ENCODE measurements at regions of chr2 and their contacts with region 1.

Region 1: DNA sequence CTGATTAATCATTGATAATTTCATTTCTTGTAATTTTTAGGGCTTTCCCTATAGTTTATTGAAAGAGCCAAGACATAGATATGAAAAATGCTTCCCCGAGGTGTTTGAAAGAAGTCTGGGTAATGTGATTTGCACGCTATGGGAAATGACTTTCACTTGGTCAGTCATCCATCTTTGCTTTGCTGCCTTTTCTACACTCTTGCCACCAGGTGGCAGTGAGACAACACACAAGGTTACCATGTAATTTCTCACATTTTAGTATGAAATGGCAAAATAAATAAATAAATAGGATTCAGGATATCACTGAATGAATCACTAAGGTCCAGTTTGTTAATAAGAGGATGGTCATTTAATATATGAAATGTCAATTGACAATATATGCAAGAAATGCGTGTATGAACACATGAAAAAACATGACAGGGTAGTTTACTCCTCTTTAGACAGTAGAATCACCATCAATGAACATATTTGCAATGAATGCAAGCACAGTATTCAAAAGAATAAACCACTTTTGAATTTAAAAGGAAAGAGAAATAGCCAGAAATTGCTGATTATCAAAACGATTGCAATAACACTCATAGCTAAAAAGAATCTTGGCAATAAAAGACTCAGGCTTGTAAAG is 52.2 kb upstream of the KCNH7 start:
- DNase-seq: peak; percentile 12
- H3K4me3 ChIP-seq: no peak overlapping the region
- CTCF ChIP-seq: peak; percentile 61

Region 2: DNA sequence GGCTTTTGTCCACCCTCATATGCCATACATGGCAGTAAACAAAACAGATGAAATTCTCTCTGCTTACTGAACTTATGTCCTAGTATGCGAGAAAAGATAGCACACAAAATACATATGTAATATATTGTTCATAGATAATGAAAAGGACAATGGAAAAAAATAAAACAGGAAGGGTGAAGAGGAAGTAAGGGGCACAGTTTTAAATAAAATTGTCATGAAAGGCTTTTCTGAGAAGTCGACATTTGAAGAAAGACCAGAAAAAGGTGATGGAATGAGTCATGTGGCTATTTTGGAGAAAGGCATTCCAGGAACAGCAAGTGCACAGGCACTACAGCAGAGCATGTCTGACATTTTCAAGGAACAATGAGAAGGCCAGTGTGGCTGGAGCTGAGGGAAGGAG is 108.7 kb before region 1 on chr2:
- CTCF ChIA-PET with region 1: no interaction called
- POLR2A ChIA-PET with region 1: no interaction called
- DNase-seq: no peak
- H3K4me3 ChIP-seq: no peak overlapping the region
- CTCF ChIP-seq: no peak

Region 3: GRCh38 chr2:163132850-163133249 is 242.0 kb after region 1 on chr2:
- CTCF ChIA-PET with region 1: interaction called, 11 read pairs
- POLR2A ChIA-PET with region 1: no interaction called
- DNase-seq: no peak
- H3K4me3 ChIP-seq: no peak overlapping the region
- CTCF ChIP-seq: peak; percentile 18

Measured in AG04449 (cell line).